ENCODE measurements at regions of chr3 and their contacts with region 1.

Region 1: DNA sequence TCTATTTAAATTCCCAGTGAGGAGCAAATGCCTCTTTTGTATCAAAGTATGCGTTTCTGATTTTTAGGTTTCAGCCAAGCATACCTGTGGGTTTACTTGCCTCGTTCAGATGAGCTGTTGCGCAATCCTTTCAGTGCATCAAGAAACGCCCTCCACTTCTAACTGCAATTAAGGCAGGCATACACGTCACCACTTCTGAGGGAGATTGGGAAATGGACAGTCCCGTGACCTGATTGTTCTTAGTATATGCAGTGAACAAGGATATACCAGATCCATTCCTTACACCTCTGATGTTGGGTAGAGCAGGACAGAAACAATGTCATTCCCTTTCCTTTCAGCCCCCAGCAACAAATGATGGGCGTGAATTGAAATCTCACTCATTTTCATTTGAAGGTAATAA is 219.0 kb downstream of the ITPR1 start:
- DNase-seq: no peak
- H3K4me3 Mint-ChIP-seq: no peak overlapping the region
- H3K27ac Mint-ChIP-seq: no peak overlapping the region
- H3K4me1 Mint-ChIP-seq: peaks cover 22% of the 10 kb centered on the region
- H3K27me3 Mint-ChIP-seq: no peaks in the 10 kb centered on the region

Region 2: GRCh38 chr3:4698125-4698821 is 13.9 kb before region 1 on chr3:
- CTCF ChIA-PET with region 1: interaction called, 12 read pairs
- POLR2A ChIA-PET with region 1: no interaction called
- DNase-seq: no peak
- H3K4me3 Mint-ChIP-seq: no peak overlapping the region
- H3K27ac Mint-ChIP-seq: no peak overlapping the region
- H3K4me1 Mint-ChIP-seq: peaks cover 12% of the 10 kb centered on the region
- H3K27me3 Mint-ChIP-seq: no peaks in the 10 kb centered on the region

Region 3: GRCh38 chr3:4972652-4973643 is 260.8 kb after region 1 on chr3:
- CTCF ChIA-PET with region 1: interaction called, 119 read pairs
- POLR2A ChIA-PET with region 1: interaction called, 30 read pairs
- DNase-seq: no peak
- H3K4me3 Mint-ChIP-seq: peak overlapping the region; percentile 5
- H3K27ac Mint-ChIP-seq: peak overlapping the region; percentile 45
- H3K4me1 Mint-ChIP-seq: peaks cover 38% of the 10 kb centered on the region
- H3K27me3 Mint-ChIP-seq: peaks cover 2% of the 10 kb centered on the region

Region 4: DNA sequence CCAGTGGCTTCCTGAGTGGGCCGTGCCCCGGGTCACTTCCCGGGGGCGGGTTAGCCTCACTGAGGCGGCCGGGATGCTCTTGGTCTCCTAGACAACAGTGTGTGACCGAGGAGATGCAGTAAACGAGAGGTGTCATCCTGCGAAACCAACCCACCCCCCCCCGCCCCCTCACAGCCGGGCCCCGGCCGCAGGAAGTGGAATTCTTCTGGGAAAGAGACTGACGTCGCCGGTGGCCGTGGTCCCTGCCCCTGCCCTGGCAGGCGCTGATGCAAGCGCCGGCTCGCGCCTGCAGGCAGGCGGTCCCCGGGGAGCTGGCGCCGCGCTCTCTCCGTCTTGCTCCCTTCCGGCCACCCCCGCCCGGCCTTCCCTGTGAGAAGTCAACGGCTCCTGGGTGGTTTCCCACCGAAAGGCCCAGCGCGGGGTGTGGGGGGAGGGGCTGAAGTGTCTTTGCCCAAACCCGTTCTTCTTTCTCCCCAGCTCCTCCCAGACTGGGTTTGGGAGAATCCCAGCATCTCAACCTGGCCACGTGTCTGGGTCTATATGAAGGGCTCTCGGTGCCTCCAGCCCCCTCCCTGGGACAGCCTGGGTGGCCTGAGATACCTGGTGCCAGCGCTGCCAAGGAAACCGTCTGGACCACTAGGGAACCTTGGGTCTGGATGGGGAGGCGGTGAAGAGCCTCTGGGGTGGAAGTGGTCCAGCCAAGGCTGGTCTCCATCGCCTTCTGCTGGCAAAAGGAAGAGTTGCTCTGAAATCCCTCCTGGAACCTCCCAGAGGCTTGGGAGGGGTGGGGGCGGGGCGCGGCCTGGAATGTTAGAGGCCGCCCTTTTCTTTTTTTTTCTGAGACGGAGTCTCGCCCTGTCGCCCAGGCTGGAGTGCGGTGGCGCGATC is 314.4 kb after region 1 on chr3:
- CTCF ChIA-PET with region 1: interaction called, 47 read pairs
- POLR2A ChIA-PET with region 1: interaction called, 8 read pairs
- DNase-seq: peak; percentile 69
- H3K4me3 Mint-ChIP-seq: peak overlapping the region; percentile 82
- H3K27ac Mint-ChIP-seq: peak overlapping the region; percentile 81
- H3K4me1 Mint-ChIP-seq: peaks cover 58% of the 10 kb centered on the region
- H3K27me3 Mint-ChIP-seq: no peaks in the 10 kb centered on the region

Region 5: GRCh38 chr3:5057857-5058324 is 345.7 kb after region 1 on chr3:
- CTCF ChIA-PET with region 1: interaction called, 123 read pairs
- POLR2A ChIA-PET with region 1: interaction called, 8 read pairs
- DNase-seq: peak; percentile 86
- H3K4me3 Mint-ChIP-seq: no peak overlapping the region
- H3K27ac Mint-ChIP-seq: no peak overlapping the region
- H3K4me1 Mint-ChIP-seq: peaks cover 50% of the 10 kb centered on the region
- H3K27me3 Mint-ChIP-seq: peaks cover 10% of the 10 kb centered on the region